ENCODE measurements at regions of chr15 and their contacts with region 1.

Region 1: GRCh38 chr15:31488426-31489204 is 162.0 kb downstream of the KLF13 start:
- DNase-seq: peak; percentile 59
- ATAC-seq: peak; percentile 42
- H3K4me3 Mint-ChIP-seq: peak overlapping the region; percentile 21
- H3K27ac Mint-ChIP-seq: peak overlapping the region; percentile 79
- H3K4me1 Mint-ChIP-seq: peaks cover 55% of the 10 kb centered on the region
- H3K27me3 Mint-ChIP-seq: peaks cover 3% of the 10 kb centered on the region

Region 2: GRCh38 chr15:30991255-30992072 is 497.2 kb before region 1 on chr15 and contains the start of gene MTMR10:
- CTCF ChIA-PET with region 1: no interaction called
- POLR2A ChIA-PET with region 1: no interaction called
- intact Hi-C with region 1: loop called (anchors 2 to 10 kb)
- DNase-seq: peak; percentile 80
- ATAC-seq: peak; percentile 93
- H3K4me3 Mint-ChIP-seq: peak within 1 kb of the TSS; percentile 95
- H3K27ac Mint-ChIP-seq: peak within 1 kb of the TSS; percentile 84
- H3K4me1 Mint-ChIP-seq: peaks cover 27% of the 10 kb centered on the region
- H3K27me3 Mint-ChIP-seq: peaks cover 1% of the 10 kb centered on the region
- total RNA-seq, gene MTMR10: 10.1 to 17.6 TPM

Region 3: GRCh38 chr15:31206386-31206785 is 282.2 kb before region 1 on chr15:
- CTCF ChIA-PET with region 1: interaction called, 19 read pairs
- POLR2A ChIA-PET with region 1: no interaction called
- intact Hi-C with region 1: no loop called
- DNase-seq: no peak
- ATAC-seq: no peak
- H3K4me3 Mint-ChIP-seq: no peak overlapping the region
- H3K27ac Mint-ChIP-seq: no peak overlapping the region
- H3K4me1 Mint-ChIP-seq: peaks cover 29% of the 10 kb centered on the region
- H3K27me3 Mint-ChIP-seq: no peaks in the 10 kb centered on the region

Region 4: GRCh38 chr15:31326156-31326732 is 162.4 kb before region 1 on chr15:
- CTCF ChIA-PET with region 1: interaction called, 13 read pairs
- POLR2A ChIA-PET with region 1: no interaction called
- intact Hi-C with region 1: loop called (anchors 1 to 2 kb)
- DNase-seq: peak; percentile 100
- ATAC-seq: peak; percentile 83
- H3K4me3 Mint-ChIP-seq: peak overlapping the region; percentile 85
- H3K27ac Mint-ChIP-seq: no peak overlapping the region
- H3K4me1 Mint-ChIP-seq: peaks cover 37% of the 10 kb centered on the region
- H3K27me3 Mint-ChIP-seq: no peaks in the 10 kb centered on the region

Region 5: GRCh38 chr15:31365655-31366127 is 122.9 kb before region 1 on chr15:
- CTCF ChIA-PET with region 1: interaction called, 20 read pairs
- POLR2A ChIA-PET with region 1: no interaction called
- intact Hi-C with region 1: loop called in 1 of 2 experiments (anchors 2 kb)
- DNase-seq: peak; percentile 92
- ATAC-seq: peak; percentile 68
- H3K4me3 Mint-ChIP-seq: peak overlapping the region; percentile 61
- H3K27ac Mint-ChIP-seq: peak overlapping the region; percentile 96
- H3K4me1 Mint-ChIP-seq: peaks cover 99% of the 10 kb centered on the region
- H3K27me3 Mint-ChIP-seq: no peaks in the 10 kb centered on the region

Region 6: DNA sequence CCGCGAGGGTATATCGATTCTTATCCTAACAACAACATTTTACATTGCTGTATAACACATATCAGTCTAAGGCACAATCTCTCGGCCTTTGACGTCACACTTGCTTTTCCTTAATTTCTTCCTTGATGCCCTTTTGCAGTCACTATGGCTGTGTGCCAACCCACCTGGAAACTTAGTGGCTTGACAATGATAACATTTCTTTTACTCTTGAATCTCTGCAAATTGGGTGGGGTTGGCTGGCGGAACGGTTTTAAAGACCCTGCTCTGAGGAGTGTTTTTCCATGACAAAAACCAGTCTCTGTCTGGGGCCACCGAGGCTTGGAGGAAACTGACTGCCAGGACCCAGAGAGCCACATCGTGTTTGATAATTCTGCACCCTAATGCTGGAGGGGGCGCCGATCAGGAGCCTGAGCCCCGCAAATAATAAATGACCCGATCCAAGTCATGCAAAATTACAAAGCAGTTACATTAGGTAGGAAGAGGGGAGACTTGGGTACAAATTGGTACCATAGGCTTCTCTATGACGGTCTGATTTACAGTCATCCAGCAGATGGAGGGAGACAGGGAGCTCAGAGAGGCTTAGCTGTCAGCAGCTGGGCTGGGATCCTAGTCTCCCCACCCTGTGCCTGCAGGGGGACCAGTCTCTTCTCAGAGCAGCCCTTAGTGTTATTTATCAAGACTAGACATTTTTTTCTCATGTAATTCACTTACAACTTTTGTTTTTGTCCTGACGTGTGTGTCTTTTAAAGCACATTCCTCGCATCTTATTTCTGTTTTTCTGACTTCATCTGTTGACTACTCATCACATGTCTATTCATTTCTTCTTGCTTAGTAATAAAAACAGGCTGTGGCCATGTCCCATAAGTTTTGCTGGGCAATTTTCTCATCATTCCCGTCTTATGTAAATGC is 46.2 kb before region 1 on chr15:
- CTCF ChIA-PET with region 1: interaction called, 137 read pairs
- POLR2A ChIA-PET with region 1: interaction called, 3 read pairs
- intact Hi-C with region 1: loop called (anchors 1 kb)
- DNase-seq: peak; percentile 38
- ATAC-seq: no peak
- H3K4me3 Mint-ChIP-seq: peak overlapping the region; percentile 8
- H3K27ac Mint-ChIP-seq: peak overlapping the region; percentile 4
- H3K4me1 Mint-ChIP-seq: peaks cover 58% of the 10 kb centered on the region
- H3K27me3 Mint-ChIP-seq: peaks cover 2% of the 10 kb centered on the region

Region 7: GRCh38 chr15:31472636-31473384 is 15.8 kb before region 1 on chr15:
- CTCF ChIA-PET with region 1: interaction called, 49 read pairs
- POLR2A ChIA-PET with region 1: no interaction called
- intact Hi-C with region 1: loop called in 1 of 2 experiments (anchors 1 kb)
- DNase-seq: peak; percentile 74
- ATAC-seq: peak; percentile 93
- H3K4me3 Mint-ChIP-seq: peak overlapping the region; percentile 70
- H3K27ac Mint-ChIP-seq: peak overlapping the region; percentile 95
- H3K4me1 Mint-ChIP-seq: peaks cover 41% of the 10 kb centered on the region
- H3K27me3 Mint-ChIP-seq: no peaks in the 10 kb centered on the region

Region 8: GRCh38 chr15:31540633-31541032 is 52.0 kb after region 1 on chr15:
- CTCF ChIA-PET with region 1: no interaction called
- POLR2A ChIA-PET with region 1: no interaction called
- intact Hi-C with region 1: no loop called
- DNase-seq: no peak
- ATAC-seq: no peak
- H3K4me3 Mint-ChIP-seq: no peak overlapping the region
- H3K27ac Mint-ChIP-seq: no peak overlapping the region
- H3K4me1 Mint-ChIP-seq: peaks cover 9% of the 10 kb centered on the region
- H3K27me3 Mint-ChIP-seq: peaks cover 27% of the 10 kb centered on the region

Region 9: GRCh38 chr15:31554261-31554660 is 65.6 kb after region 1 on chr15:
- CTCF ChIA-PET with region 1: no interaction called
- POLR2A ChIA-PET with region 1: no interaction called
- intact Hi-C with region 1: no loop called
- DNase-seq: no peak
- ATAC-seq: no peak
- H3K4me3 Mint-ChIP-seq: no peak overlapping the region
- H3K27ac Mint-ChIP-seq: no peak overlapping the region
- H3K4me1 Mint-ChIP-seq: peaks cover 3% of the 10 kb centered on the region
- H3K27me3 Mint-ChIP-seq: peaks cover 2% of the 10 kb centered on the region

Measured in activated CD4-positive, alpha-beta T cell treated with anti-CD3 and anti-CD28 coated beads for 36 hours (primary cell).